Natural killer cell (primary cell): ENCODE measurements at regions of chr2 and their contacts with region 1.

Region 1: DNA sequence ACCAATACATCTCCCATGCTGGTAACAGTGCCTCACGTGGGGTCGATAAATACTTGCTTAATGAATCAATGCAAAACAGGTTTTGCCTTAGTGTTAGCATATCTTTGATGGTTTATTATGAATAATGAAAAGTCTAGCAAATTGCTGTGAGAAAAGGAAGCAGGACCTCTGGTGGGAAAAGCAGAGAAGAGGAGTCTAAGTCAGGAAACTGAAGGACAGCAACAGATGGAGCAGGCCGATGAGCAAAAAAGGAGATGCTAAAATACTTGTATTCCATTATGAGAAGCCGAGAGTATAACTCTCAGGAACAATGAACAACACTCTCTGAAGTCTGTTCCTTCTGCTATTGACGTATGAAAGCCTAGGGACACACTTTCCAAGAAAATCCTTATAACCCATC is 555.2 kb upstream of the KLHL29 start:
- DNase-seq: no peak
- ATAC-seq: no peak
- H3K4me3 ChIP-seq: no peak overlapping the region
- H3K4me3 Mint-ChIP-seq: no peak overlapping the region
- H3K27ac ChIP-seq: no peak overlapping the region
- H3K27ac Mint-ChIP-seq: no peak overlapping the region
- H3K4me1 ChIP-seq: no peaks in the 10 kb centered on the region
- H3K4me1 Mint-ChIP-seq: no peaks in the 10 kb centered on the region
- H3K27me3 ChIP-seq: no peaks in the 10 kb centered on the region
- H3K27me3 Mint-ChIP-seq: no peaks in the 10 kb centered on the region
- CTCF ChIP-seq: no peak

Region 2: GRCh38 chr2:22800412-22800811 is 29.4 kb before region 1 on chr2:
- intact Hi-C with region 1: loop called (anchors 1 kb)
- DNase-seq: no peak
- ATAC-seq: no peak
- H3K4me3 ChIP-seq: no peak overlapping the region
- H3K4me3 Mint-ChIP-seq: no peak overlapping the region
- H3K27ac ChIP-seq: no peak overlapping the region
- H3K27ac Mint-ChIP-seq: no peak overlapping the region
- H3K4me1 ChIP-seq: no peaks in the 10 kb centered on the region
- H3K4me1 Mint-ChIP-seq: no peaks in the 10 kb centered on the region
- H3K27me3 ChIP-seq: no peaks in the 10 kb centered on the region
- H3K27me3 Mint-ChIP-seq: no peaks in the 10 kb centered on the region
- CTCF ChIP-seq: no peak